Transverse colon (tissue), 4 donors: ENCODE measurements at regions of chr6 and their contacts with region 1.

Region 1: GRCh38 chr6:64330694-64331307 is 695.2 kb downstream of the PHF3 start:
- DNase-seq: peak; percentile 83
- H3K4me3 ChIP-seq: no peak overlapping the region
- H3K27ac ChIP-seq: no peak overlapping the region
- H3K4me1 ChIP-seq: no peaks in the 10 kb centered on the region
- H3K27me3 ChIP-seq: no peaks in the 10 kb centered on the region
- CTCF ChIP-seq: peak; percentile 50 to 71 (median 64)
- EP300 ChIP-seq: no peak
- POLR2A ChIP-seq: no peak

Region 2: GRCh38 chr6:63677282-63677681 is 653.5 kb before region 1 on chr6:
- in situ Hi-C with region 1: no loop called
- intact Hi-C with region 1: no loop called
- DNase-seq: no peak
- H3K4me3 ChIP-seq: no peak overlapping the region
- H3K27ac ChIP-seq: peak overlapping the region; percentile 38 to 64 (median 50)
- H3K4me1 ChIP-seq: peaks cover 18 to 77% (median 37%) of the 10 kb centered on the region in 4 donors
- H3K27me3 ChIP-seq: no peaks in the 10 kb centered on the region
- CTCF ChIP-seq: no peak
- EP300 ChIP-seq: no peak
- POLR2A ChIP-seq: no peak

Region 3: DNA sequence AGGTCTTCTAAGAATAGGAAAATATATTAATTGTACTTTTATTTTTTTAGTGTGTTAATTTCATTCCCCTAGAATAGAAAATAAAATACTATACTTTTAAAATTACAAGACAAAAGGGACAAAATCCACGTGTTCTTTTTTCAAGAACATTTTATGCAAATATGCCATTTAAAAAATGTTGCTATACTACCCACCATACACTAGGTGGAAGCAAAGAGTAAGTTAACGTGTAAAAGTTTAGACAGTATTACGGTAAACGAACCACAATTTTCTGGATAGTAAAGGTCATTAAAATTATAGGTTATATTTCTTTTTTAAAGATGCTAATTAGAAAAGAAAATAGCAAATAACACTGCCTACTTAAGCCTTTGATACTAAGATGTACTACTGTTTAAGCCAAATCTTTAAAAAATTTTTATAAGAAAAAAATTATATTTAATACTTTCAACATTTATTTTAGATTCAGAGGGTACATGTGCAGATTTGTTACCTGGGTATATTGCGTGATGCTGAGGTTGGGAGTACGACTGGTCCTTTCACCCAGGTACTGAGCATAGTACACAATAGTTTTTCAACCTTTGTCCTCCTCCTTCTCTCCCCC is 407.6 kb before region 1 on chr6:
- in situ Hi-C with region 1: loop called in 3 of 4 experiments (anchors 10 kb)
- intact Hi-C with region 1: loop called (anchors 10 kb)
- DNase-seq: no peak
- H3K4me3 ChIP-seq: no peak overlapping the region
- H3K27ac ChIP-seq: no peak overlapping the region
- H3K4me1 ChIP-seq: peaks cover 0 to 17% (median 4%) of the 10 kb centered on the region in 4 donors
- H3K27me3 ChIP-seq: no peaks in the 10 kb centered on the region
- CTCF ChIP-seq: peak; percentile 57 to 70 (median 60)
- EP300 ChIP-seq: no peak
- POLR2A ChIP-seq: no peak

Region 4: GRCh38 chr6:64012351-64013001 is 318.3 kb before region 1 on chr6:
- in situ Hi-C with region 1: loop called (anchors 10 to 25 kb)
- intact Hi-C with region 1: no loop called
- DNase-seq: peak; percentile 34
- H3K4me3 ChIP-seq: no peak overlapping the region
- H3K27ac ChIP-seq: no peak overlapping the region
- H3K4me1 ChIP-seq: peaks cover 0 to 6% (median 0%) of the 10 kb centered on the region in 4 donors
- H3K27me3 ChIP-seq: no peaks in the 10 kb centered on the region
- CTCF ChIP-seq: peak; percentile 41 to 63 (median 57)
- EP300 ChIP-seq: no peak
- POLR2A ChIP-seq: no peak

Region 5: DNA sequence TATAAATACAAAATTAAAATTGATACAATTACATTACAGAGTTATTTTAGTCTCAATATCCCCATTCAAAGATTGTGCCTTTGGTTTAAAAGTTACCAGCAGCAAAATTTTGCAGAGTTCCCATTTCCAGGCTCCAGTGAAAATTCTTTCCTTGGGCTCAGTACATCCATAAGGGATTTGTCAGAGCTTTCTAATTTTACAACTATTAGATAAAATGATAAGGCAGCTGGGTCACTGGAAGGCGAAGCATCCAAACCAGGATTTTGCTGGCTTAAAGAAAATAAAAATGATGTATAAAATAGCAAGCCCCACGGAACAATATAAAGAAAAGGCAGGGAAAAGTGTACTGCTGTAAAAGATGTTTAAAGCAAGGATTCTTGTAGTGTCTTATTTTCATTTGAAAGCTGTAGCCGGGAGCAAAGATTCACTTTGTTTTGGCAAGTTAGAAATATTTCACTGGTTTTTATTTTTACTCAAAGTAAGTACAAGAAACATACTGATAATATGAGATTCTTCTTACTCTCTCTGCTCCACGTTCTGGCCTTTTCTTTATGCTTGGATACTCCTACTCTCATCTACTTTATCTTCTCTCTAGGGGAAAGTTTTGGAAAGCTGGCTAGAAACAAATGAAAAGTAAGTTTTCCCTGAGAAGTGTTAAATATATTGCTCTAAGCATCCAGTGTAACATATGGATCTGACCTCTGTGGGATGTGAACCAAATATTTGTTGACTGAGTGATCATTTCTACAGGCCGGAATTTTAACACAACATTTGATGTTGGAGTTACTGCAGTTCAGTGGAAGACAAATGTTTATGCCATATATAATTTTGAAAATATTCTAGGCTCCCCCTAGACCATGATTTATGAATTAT is 206.8 kb before region 1 on chr6:
- in situ Hi-C with region 1: no loop called
- intact Hi-C with region 1: no loop called
- DNase-seq: no peak
- H3K4me3 ChIP-seq: no peak overlapping the region
- H3K27ac ChIP-seq: no peak overlapping the region
- H3K4me1 ChIP-seq: no peaks in the 10 kb centered on the region
- H3K27me3 ChIP-seq: no peaks in the 10 kb centered on the region
- CTCF ChIP-seq: no peak
- EP300 ChIP-seq: no peak
- POLR2A ChIP-seq: no peak

Region 6: GRCh38 chr6:64250126-64250525 is 80.7 kb before region 1 on chr6:
- in situ Hi-C with region 1: no loop called
- intact Hi-C with region 1: no loop called
- DNase-seq: no peak
- H3K4me3 ChIP-seq: no peak overlapping the region
- H3K27ac ChIP-seq: no peak overlapping the region
- H3K4me1 ChIP-seq: no peaks in the 10 kb centered on the region
- H3K27me3 ChIP-seq: no peaks in the 10 kb centered on the region
- CTCF ChIP-seq: no peak
- EP300 ChIP-seq: no peak
- POLR2A ChIP-seq: no peak